ENCODE measurements at regions of chr22 and their contacts with region 1.

Region 1: DNA sequence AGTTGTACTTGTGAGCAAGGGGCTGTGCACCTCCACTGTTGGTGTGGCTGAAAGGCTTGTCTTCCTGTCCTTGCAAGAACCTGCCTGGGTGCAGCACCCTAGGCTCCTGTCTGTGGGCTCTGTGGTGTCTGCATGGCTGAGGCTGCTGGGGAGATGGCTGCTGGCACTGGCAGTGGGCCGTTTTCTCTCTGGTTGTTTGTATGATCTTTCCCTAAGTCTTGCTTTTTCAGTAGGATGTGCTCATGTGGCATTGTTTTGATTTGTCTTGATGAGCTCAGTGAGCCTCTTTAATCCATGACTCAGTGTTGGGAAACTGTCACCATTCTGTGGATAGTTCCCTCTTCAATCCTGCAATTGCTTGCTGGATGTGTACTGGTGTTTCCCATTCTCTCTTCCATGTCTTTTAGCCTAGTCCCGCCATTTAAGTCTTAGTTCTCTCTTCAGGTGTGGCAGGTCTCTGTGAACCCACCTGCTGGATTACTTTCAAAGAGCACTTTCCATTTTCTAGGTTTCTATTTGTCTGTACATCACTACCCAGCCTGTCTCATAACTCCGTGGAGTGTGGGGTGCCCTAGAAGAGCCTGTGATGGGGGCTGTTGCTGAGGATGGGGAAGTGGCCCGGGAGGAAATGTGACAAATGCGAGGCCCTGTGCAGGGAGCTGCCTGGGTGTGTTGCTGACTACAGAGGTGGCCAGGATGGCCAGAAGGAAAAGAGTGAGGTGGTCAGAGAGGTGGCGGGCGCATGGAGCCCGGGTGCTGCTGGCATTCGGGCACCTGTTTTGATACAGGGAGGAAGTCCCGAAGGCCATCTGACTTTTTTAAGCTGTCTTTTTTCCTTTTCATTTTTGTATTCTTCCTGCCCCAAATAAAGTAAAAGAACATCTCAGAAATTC is 10.6 kb downstream of the DGCR8 start:
- DNase-seq: no peak
- ATAC-seq: no peak
- H3K4me3 ChIP-seq: no peak overlapping the region
- H3K27ac ChIP-seq: no peak overlapping the region
- H3K4me1 ChIP-seq: peaks cover under 1 to 14% of the 10 kb centered on the region in 2 experiments
- H3K27me3 ChIP-seq: no peaks in the 10 kb centered on the region
- CTCF ChIP-seq: no peak
- EP300 ChIP-seq: no peak
- POLR2A ChIP-seq: no peak; the same call in 1 of the 2 replicates
- RAD21 ChIP-seq: no peak

Region 2: GRCh38 chr22:20066617-20067383 is 23.8 kb before region 1 on chr22:
- CTCF ChIA-PET with region 1: no interaction called
- POLR2A ChIA-PET with region 1: interaction called, 11 read pairs
- in situ Hi-C with region 1: no loop called
- intact Hi-C with region 1: no loop called
- DNase-seq: no peak
- ATAC-seq: no peak
- H3K4me3 ChIP-seq: no peak overlapping the region
- H3K27ac ChIP-seq: no peak overlapping the region
- H3K4me1 ChIP-seq: peaks cover 23 to 55% of the 10 kb centered on the region in 2 experiments
- H3K27me3 ChIP-seq: no peaks in the 10 kb centered on the region
- CTCF ChIP-seq: 0 out of 6 replicates have a peak, but pooled peaks of 1 of the 3 experiments have one; percentile 3
- EP300 ChIP-seq: no peak
- POLR2A ChIP-seq: peak; percentile 59; the same call in 1 of the 2 replicates
- RAD21 ChIP-seq: no peak

Region 3: GRCh38 chr22:20247010-20247505 is 156.5 kb after region 1 on chr22:
- CTCF ChIA-PET with region 1: no interaction called
- POLR2A ChIA-PET with region 1: no interaction called
- in situ Hi-C with region 1: no loop called
- intact Hi-C with region 1: no loop called
- DNase-seq: peak; percentile 80 to 92 (median 86)
- ATAC-seq: peak; percentile 61
- H3K4me3 ChIP-seq: no peak overlapping the region
- H3K27ac ChIP-seq: no peak overlapping the region
- H3K4me1 ChIP-seq: peaks cover 16 to 65% of the 10 kb centered on the region in 2 experiments; a peak in 3 of 5 replicates
- H3K27me3 ChIP-seq: peaks cover 35 to 78% of the 10 kb centered on the region in 2 experiments; a peak in 4 of 5 replicates
- CTCF ChIP-seq: peak in 2 of 3 experiments; percentile 29 to 50; a peak in 3 of 6 replicates
- EP300 ChIP-seq: no peak
- POLR2A ChIP-seq: no peak
- RAD21 ChIP-seq: no peak

Measured in K562 (cell line).